Activated naive CD4-positive, alpha-beta T cell treated with anti-CD3 and anti-CD28 coated beads for 36 hours (primary cell): ENCODE measurements at regions of chr5 and their contacts with region 1.

Region 1: GRCh38 chr5:150217873-150218692 is 28.2 kb downstream of the SLC6A7 start:
- DNase-seq: peak; percentile 91
- H3K4me3 Mint-ChIP-seq: no peak overlapping the region
- H3K27ac Mint-ChIP-seq: no peak overlapping the region
- H3K4me1 Mint-ChIP-seq: no peaks in the 10 kb centered on the region
- H3K27me3 Mint-ChIP-seq: peaks cover 4% of the 10 kb centered on the region

Region 2: DNA sequence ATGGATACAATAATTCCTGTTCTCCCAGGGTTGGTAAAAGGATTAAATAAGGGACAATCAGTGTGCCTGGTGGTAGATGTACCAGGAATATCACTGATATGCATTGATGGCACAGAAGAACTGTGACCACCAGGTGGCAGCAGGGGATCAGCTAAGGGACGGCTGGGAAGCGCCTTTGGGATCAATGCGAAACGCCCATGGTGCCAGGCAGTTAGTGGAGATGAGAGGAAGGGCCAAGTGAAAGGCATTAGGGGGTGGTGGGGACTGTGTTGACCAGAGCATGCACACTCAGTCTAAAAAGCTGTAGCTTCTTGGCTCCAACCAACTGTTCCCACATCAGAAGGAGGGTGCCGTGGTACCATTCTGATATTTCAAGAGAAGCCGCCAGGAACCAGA is 581.2 kb before region 1 on chr5:
- CTCF ChIA-PET with region 1: no interaction called
- intact Hi-C with region 1: loop called (anchors 2 kb)
- DNase-seq: peak; percentile 82
- H3K4me3 Mint-ChIP-seq: no peak overlapping the region
- H3K27ac Mint-ChIP-seq: no peak overlapping the region
- H3K4me1 Mint-ChIP-seq: peaks cover 13% of the 10 kb centered on the region
- H3K27me3 Mint-ChIP-seq: no peaks in the 10 kb centered on the region

Region 3: GRCh38 chr5:149834246-149834855 is 383.7 kb before region 1 on chr5:
- CTCF ChIA-PET with region 1: no interaction called
- intact Hi-C with region 1: loop called (anchors 1 kb)
- DNase-seq: peak; percentile 79
- H3K4me3 Mint-ChIP-seq: no peak overlapping the region
- H3K27ac Mint-ChIP-seq: no peak overlapping the region
- H3K4me1 Mint-ChIP-seq: peaks cover 5% of the 10 kb centered on the region
- H3K27me3 Mint-ChIP-seq: no peaks in the 10 kb centered on the region

Region 4: GRCh38 chr5:150129813-150130492 is 88.1 kb before region 1 on chr5:
- CTCF ChIA-PET with region 1: interaction called, 10 read pairs
- intact Hi-C with region 1: loop called (anchors 1 kb)
- DNase-seq: peak; percentile 67
- H3K4me3 Mint-ChIP-seq: no peak overlapping the region
- H3K27ac Mint-ChIP-seq: no peak overlapping the region
- H3K4me1 Mint-ChIP-seq: no peaks in the 10 kb centered on the region
- H3K27me3 Mint-ChIP-seq: no peaks in the 10 kb centered on the region

Region 5: DNA sequence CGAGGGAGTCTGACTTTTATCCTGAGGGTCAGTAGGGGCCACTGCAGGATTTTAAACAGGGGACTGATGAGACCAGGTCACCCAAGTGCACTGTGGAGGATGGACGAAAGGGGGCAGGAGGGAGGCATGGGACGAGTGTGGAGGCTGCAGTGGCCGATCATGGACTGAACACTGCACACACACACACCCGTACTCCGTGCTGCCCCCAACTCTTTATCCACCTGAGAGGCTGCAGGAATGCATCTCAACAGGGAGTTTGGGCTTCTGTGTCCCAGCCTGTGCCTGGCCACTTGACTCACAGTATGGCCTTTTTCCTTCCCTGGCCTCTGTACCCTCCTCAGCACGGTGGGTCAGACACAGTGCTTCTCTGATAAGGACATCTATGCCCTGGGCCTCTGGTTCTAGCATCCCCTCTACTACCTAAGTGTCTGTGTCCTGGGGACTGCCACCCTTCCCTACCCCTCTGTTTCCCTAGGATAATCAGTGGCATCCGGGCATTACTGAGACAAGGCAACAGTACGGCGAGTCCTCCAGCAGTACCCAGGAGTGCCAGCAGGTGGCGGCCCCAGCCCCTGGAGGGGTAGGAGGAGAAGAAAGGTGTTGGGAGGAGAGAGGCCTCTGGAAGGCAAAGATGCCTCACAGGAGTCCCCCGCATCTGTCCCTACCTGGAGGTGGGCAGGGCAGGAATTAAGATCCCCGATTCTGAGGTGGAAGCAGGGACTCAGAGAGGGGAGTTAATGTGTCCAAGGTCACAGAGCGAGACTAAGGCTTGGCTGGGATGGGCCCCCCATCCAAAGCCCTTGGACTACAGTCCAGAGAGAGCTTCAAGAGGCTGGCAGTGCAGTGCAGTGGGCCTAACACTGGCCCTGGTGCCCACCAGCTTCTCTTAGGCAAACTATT is 56.6 kb before region 1 on chr5:
- CTCF ChIA-PET with region 1: interaction called, 9 read pairs
- intact Hi-C with region 1: loop called (anchors 1 kb)
- DNase-seq: peak; percentile 87
- H3K4me3 Mint-ChIP-seq: no peak overlapping the region
- H3K27ac Mint-ChIP-seq: no peak overlapping the region
- H3K4me1 Mint-ChIP-seq: no peaks in the 10 kb centered on the region
- H3K27me3 Mint-ChIP-seq: peaks cover 17% of the 10 kb centered on the region

Region 6: DNA sequence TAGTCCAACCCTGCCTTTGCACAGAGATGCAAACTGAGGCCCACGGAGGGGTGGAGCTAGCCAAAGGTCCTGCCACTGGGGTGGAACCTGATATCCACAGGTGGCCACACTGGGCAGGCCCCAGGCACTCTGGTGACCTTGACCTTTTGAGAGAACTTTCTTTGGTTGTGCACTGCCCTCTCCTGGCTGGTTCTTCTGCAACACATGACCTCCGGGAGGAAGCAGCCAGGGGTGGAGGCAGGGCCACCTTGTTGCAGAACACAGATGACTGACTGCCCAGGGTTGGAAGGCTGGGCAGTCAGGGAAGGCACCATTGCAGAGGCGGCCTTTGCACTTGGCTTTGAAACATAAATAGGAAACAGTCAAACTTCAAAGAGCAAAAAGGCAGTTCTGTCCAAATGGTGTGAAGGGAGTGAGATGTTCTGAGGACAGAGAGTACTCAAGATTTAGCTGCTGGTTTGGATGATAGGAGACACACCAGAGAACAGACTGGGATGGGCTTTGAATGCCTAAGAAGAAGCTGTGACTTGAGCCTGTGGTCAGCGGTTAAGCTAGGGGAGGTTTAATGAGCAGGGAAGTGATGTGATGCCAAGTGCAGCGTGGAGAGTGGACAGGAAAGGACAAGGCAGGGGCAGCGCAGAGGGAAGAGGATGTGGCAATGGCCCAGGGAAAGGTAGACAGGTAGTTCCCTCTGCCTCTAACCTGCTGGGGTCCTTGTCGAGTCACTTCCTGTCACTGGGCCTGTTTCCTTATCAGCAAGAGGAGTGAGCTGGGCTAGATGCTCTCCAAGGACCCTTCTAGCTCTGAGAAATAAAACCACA is 132.7 kb after region 1 on chr5:
- CTCF ChIA-PET with region 1: interaction called, 3 read pairs
- intact Hi-C with region 1: loop called (anchors 1 kb)
- DNase-seq: peak; percentile 81
- H3K4me3 Mint-ChIP-seq: no peak overlapping the region
- H3K27ac Mint-ChIP-seq: peak overlapping the region; percentile 28
- H3K4me1 Mint-ChIP-seq: peaks cover 8% of the 10 kb centered on the region
- H3K27me3 Mint-ChIP-seq: no peaks in the 10 kb centered on the region

Region 7: GRCh38 chr5:150503977-150504620 is 286.0 kb after region 1 on chr5:
- CTCF ChIA-PET with region 1: no interaction called
- intact Hi-C with region 1: no loop called
- DNase-seq: no peak
- H3K4me3 Mint-ChIP-seq: no peak overlapping the region
- H3K27ac Mint-ChIP-seq: no peak overlapping the region
- H3K4me1 Mint-ChIP-seq: no peaks in the 10 kb centered on the region
- H3K27me3 Mint-ChIP-seq: no peaks in the 10 kb centered on the region